ENCODE measurements at regions of chr14 and their contacts with region 1.

Region 1: DNA sequence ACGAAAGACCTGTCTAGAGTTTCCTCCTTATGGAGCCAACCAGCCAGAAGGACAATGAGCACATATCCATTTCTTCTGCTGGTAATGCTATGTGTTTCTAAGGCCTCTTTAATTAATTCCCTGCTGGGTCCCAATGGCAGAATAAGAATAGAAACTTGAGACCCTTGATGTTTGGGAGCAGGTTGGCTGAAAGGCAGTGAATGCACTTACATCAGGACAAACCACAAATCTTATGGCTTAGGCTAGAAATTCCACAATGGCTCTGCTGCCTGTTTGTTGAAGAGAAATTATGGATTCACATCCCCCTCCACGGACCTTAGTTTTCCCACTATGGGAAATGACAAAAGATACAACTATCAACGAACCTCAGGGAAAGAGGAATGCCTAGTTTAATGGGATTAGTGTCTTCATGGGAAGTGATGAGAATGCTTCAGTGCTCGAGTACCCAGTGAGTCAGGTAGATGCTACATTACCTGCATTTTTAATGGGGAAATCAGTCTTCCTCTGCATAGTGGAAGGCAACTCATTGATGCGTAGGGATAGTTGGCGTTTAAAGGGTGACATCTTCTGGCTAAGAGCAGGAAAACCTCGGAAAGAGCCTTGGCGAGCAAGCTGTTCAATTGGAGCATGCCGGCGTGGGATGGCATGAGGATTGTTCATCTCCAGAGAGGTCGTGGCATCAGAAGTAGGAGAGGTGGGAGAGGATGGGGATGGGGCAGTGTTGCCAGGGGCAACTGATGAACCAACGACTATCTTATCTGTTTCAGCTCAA is 46.5 kb downstream of the PAPLN start:
- DNase-seq: peak; percentile 45
- ATAC-seq: peak; percentile 75
- H3K4me3 Mint-ChIP-seq: peak overlapping the region; percentile 12; the same call in 1 of the 2 replicates
- H3K27ac Mint-ChIP-seq: peak overlapping the region; percentile 76
- H3K4me1 Mint-ChIP-seq: peaks cover 44% of the 10 kb centered on the region
- H3K27me3 Mint-ChIP-seq: peaks cover 18% of the 10 kb centered on the region
- CTCF ChIP-seq: no peak

Region 2: DNA sequence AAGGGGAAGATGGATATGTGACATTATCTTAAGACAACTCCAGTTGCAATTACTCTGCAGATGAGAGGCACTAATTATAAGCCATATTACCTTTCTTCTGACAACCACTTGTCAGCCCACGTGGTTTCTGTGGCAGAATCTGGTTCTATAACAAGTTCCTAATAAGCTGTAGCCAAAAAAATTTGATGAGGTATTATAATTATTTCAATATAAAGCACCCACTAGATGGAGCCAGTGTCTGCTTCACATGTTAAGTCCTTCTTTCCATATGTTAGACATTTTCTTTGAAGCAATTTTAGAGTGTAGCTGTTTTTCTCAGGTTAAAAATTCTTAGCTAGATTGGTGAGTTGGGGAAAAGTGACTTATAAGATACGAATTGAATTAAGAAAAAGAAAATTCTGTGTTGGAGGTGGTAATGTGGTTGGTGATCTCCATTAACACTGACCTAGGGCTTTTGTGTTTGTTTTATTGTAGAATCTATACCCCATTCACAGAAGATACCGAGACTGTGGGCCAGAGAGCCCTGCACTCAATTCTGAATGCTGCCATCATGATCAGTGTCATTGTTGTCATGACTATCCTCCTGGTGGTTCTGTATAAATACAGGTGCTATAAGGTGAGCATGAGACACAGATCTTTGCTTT is 110.6 kb before region 1 on chr14:
- CTCF ChIA-PET with region 1: interaction called, 15 read pairs
- POLR2A ChIA-PET with region 1: no interaction called
- DNase-seq: no peak
- ATAC-seq: no peak
- H3K4me3 Mint-ChIP-seq: no peak overlapping the region
- H3K27ac Mint-ChIP-seq: no peak overlapping the region
- H3K4me1 Mint-ChIP-seq: peaks cover 21% of the 10 kb centered on the region
- H3K27me3 Mint-ChIP-seq: peaks cover 3% of the 10 kb centered on the region; the same call in 1 of the 2 replicates
- CTCF ChIP-seq: no peak

Region 3: GRCh38 chr14:73458151-73458976 is 174.6 kb after region 1 on chr14 and contains the start of gene NUMB:
- CTCF ChIA-PET with region 1: interaction called, 10 read pairs
- POLR2A ChIA-PET with region 1: no interaction called
- DNase-seq: peak; percentile 98
- ATAC-seq: peak; percentile 95
- H3K4me3 Mint-ChIP-seq: peak within 1 kb of the TSS; percentile 89
- H3K27ac Mint-ChIP-seq: peak within 1 kb of the TSS; percentile 97
- H3K4me1 Mint-ChIP-seq: peaks cover 41% of the 10 kb centered on the region
- H3K27me3 Mint-ChIP-seq: no peaks in the 10 kb centered on the region; the same call in 1 of the 2 replicates
- CTCF ChIP-seq: no peak
- total RNA-seq, gene NUMB: 42.0 to 54.0 TPM (median 53.8 TPM) in 3 replicates

Measured in WTC11 (cell line).